Ovary (tissue), 10 donors: ENCODE measurements at regions of chr4 and their contacts with region 1.

Region 1: GRCh38 chr4:176319704-176320339 is at the start of gene SPCS3:
- DNase-seq: peak; percentile 95 to 97 (median 96)
- H3K4me3 ChIP-seq: peak within 1 kb of the TSS; percentile 62
- H3K27ac ChIP-seq: peak within 1 kb of the TSS; percentile 89 to 97
- H3K4me1 ChIP-seq: peaks cover 1% of the 10 kb centered on the region
- H3K27me3 ChIP-seq: no peaks in the 10 kb centered on the region
- CTCF ChIP-seq: no peak
- EP300 ChIP-seq: no peak
- POLR2A ChIP-seq: peak; percentile 85
- total RNA-seq, gene SPCS3: 41.7 to 89.3 (median 63.8) TPM

Region 2: DNA sequence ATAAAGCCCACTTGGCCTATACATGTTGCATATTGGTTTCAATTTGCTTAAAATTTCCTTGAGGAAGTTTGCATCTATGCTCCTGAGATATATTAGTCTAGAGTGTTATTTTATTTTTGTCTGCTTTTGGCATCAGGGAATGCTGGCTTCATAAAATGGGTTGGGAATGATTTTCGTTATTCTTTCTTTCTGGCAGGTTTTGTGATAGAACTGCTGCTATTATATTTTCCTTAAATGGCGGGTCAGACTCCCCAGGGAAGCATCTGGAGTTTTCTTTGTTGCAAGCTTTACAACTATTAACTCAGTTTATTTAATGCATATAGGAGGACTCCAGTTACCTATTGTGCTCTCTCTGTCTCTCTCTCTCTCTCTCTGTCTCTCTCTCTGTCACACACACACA is 336.2 kb before region 1 on chr4:
- intact Hi-C with region 1: loop called in 1 of 4 experiments (anchors 5 kb)
- DNase-seq: no peak
- H3K4me3 ChIP-seq: no peak overlapping the region
- H3K27ac ChIP-seq: no peak overlapping the region
- H3K4me1 ChIP-seq: no peaks in the 10 kb centered on the region
- H3K27me3 ChIP-seq: no peaks in the 10 kb centered on the region
- CTCF ChIP-seq: no peak
- EP300 ChIP-seq: no peak
- POLR2A ChIP-seq: no peak

Region 3: DNA sequence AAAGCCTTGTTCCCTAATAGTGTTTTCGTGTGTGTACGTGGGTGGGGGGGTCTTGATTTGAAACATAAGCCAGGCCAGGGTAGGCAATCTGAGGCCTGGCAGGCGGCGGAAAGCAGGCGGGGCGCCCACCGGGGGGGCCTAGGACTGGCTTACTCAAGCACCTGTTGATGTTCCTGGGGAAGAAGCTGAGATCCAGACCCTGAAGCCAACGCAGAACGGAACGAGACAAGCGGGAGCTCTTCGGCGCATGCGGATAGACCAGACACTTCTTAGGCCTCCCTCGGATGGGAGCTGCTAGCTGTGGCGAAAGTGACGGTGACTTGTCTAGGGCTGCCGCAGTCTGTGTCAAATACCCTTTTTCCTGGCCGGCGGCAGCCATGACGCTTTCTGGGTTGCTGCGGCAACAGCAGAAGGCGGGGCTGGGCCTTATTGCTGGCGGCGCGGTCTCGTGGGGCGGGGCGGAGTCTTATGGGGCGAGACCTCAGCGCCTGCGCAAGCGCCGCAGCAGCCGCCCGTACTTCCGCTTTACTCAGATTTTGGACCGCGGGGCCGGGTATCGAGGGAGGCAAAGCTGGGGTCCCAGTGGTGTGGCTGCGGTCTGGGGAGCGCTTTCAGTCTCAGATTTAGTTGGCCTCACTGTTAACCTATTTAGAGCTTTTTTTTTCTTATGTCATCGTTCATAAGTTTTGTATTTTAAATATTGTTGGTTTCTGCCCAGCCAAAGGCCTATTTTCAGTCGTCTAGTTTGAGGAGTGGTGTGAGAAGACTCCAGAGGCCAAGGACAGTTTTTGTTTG is 124.4 kb before region 1 on chr4 and contains the start of gene SPATA4:
- intact Hi-C with region 1: loop called in 1 of 4 experiments (anchors 10 kb)
- DNase-seq: peak; percentile 91 to 95 (median 93)
- H3K4me3 ChIP-seq: peak within 1 kb of the TSS; percentile 66
- H3K27ac ChIP-seq: peak within 1 kb of the TSS in 1 of 2 donors; percentile 43
- H3K4me1 ChIP-seq: no peaks in the 10 kb centered on the region
- H3K27me3 ChIP-seq: no peaks in the 10 kb centered on the region
- CTCF ChIP-seq: no peak
- EP300 ChIP-seq: no peak
- POLR2A ChIP-seq: no peak
- total RNA-seq, gene SPATA4: 0.22 to 3.7 (median 0.26) TPM in 4 of 7 donors, not detected in the others

Region 4: GRCh38 chr4:176377780-176378179 is 58.0 kb after region 1 on chr4:
- intact Hi-C with region 1: no loop called
- DNase-seq: no peak
- H3K4me3 ChIP-seq: no peak overlapping the region
- H3K27ac ChIP-seq: no peak overlapping the region
- H3K4me1 ChIP-seq: peaks cover 2% of the 10 kb centered on the region
- H3K27me3 ChIP-seq: no peaks in the 10 kb centered on the region
- CTCF ChIP-seq: peak in 1 of 3 donors; percentile 16
- EP300 ChIP-seq: no peak
- POLR2A ChIP-seq: no peak